ENCODE measurements at regions of chr3 and their contacts with region 1.

Region 1: DNA sequence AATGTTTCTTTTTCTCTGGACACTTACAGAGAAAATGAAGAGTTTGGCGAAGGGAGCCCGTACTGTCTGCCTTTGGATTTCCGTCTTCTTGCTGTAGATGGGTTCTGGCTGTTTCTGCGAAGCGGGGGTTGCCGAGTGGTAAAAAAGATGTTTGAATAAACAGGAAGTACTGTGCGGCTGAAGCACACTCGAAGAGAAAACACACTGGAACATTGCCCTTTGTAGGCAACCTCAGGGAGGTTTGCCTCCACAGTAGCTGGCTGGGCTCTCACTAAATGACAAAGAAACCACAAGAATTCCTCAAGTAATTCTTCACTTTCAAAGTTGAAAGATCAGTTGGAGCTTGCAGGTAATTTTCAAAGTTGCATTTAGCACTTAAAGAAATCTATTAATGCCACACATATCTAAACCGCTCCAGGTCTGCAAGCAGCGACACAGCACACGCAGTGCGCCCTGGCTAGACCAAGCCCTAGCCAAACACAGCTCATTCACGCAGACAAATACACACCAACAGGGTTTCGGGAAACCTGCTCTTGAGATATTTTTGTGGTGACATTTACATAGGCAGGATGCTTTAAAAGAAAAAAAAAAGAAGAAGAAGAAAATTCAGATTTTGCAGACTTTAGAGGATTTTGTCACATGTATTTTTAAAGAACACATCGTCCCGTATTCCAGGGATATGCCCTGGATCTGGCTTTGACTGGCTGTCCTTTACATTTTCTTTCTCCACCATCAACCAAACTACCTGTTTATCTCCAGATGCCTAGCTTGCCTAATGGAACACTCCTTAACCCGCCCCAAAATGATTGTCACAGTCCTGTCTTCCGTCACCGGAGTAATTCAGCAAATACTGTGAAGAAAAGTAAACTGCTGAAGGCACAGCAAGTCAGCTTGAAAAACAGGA is 452.8 kb downstream of the FOXP1 start:
- DNase-seq: peak; percentile 67
- H3K4me3 Mint-ChIP-seq: peak overlapping the region; percentile 89
- H3K27ac Mint-ChIP-seq: peak overlapping the region; percentile 93
- H3K4me1 Mint-ChIP-seq: peaks cover 65% of the 10 kb centered on the region
- H3K27me3 Mint-ChIP-seq: no peaks in the 10 kb centered on the region

Region 2: GRCh38 chr3:70856414-70857162 is 274.1 kb before region 1 on chr3:
- intact Hi-C with region 1: loop called (anchors 5 kb)
- DNase-seq: no peak
- H3K4me3 Mint-ChIP-seq: no peak overlapping the region
- H3K27ac Mint-ChIP-seq: peak overlapping the region; percentile 49
- H3K4me1 Mint-ChIP-seq: peaks cover 22% of the 10 kb centered on the region
- H3K27me3 Mint-ChIP-seq: peaks cover 6% of the 10 kb centered on the region

Region 3: GRCh38 chr3:71069797-71070196 is 60.9 kb before region 1 on chr3:
- intact Hi-C with region 1: loop called (anchors 1 kb)
- DNase-seq: peak; percentile 33
- H3K4me3 Mint-ChIP-seq: no peak overlapping the region
- H3K27ac Mint-ChIP-seq: peak overlapping the region; percentile 6
- H3K4me1 Mint-ChIP-seq: peaks cover 72% of the 10 kb centered on the region
- H3K27me3 Mint-ChIP-seq: no peaks in the 10 kb centered on the region

Region 4: GRCh38 chr3:71195492-71195891 is 64.8 kb after region 1 on chr3:
- intact Hi-C with region 1: loop called (anchors 1 kb)
- DNase-seq: no peak
- H3K4me3 Mint-ChIP-seq: no peak overlapping the region
- H3K27ac Mint-ChIP-seq: no peak overlapping the region
- H3K4me1 Mint-ChIP-seq: peaks cover 18% of the 10 kb centered on the region
- H3K27me3 Mint-ChIP-seq: peaks cover 5% of the 10 kb centered on the region

Region 5: GRCh38 chr3:71389911-71390573 is 259.3 kb after region 1 on chr3:
- intact Hi-C with region 1: loop called (anchors 2 kb)
- DNase-seq: no peak
- H3K4me3 Mint-ChIP-seq: peak overlapping the region; percentile 10
- H3K27ac Mint-ChIP-seq: peak overlapping the region; percentile 27
- H3K4me1 Mint-ChIP-seq: peaks cover 33% of the 10 kb centered on the region
- H3K27me3 Mint-ChIP-seq: peaks cover 18% of the 10 kb centered on the region

Region 6: GRCh38 chr3:71495708-71496472 is 365.2 kb after region 1 on chr3:
- intact Hi-C with region 1: loop called (anchors 2 kb)
- DNase-seq: peak; percentile 4
- H3K4me3 Mint-ChIP-seq: peak overlapping the region; percentile 22
- H3K27ac Mint-ChIP-seq: peak overlapping the region; percentile 40
- H3K4me1 Mint-ChIP-seq: peaks cover 57% of the 10 kb centered on the region
- H3K27me3 Mint-ChIP-seq: peaks cover 6% of the 10 kb centered on the region

Measured in activated T-helper 1 cell treated with anti-CD3 and anti-CD28 coated beads, Interleukin-12 subunit alpha, Interleukin-12 subunit beta, Interleukin-2, Interleukin-4 antibody, amounts not matched to agents 30 ng/mL and 10 ng/mL and 1 ng/mL, durations not matched to agents 14 hours and 24 hours and 36 hours (primary cell).